ENCODE measurements at regions of chr1 and their contacts with region 1.

Region 1: DNA sequence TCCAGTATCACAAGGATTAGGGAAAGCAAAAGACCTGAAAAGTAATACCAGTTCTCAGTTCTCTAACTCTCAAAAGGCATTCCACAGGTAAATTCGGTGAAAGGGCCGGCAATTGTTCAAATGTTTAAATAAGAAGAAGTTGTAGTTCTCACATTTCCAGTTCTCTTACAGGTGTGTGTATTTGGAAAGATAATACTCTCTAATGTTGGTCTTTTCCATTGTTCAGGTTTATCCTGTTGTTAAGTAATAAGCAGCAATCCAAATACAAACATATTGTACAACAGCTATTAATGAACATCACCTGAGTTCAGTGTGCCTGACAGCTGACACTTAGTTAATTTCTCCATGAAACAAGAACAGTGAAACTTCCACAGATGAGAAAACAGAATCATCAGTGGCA is 13.2 kb upstream of the PRKAB2 start:
- DNase-seq: no peak
- H3K4me3 ChIP-seq: no peak overlapping the region
- H3K27ac ChIP-seq: no peak overlapping the region
- H3K4me1 ChIP-seq: no peaks in the 10 kb centered on the region
- H3K27me3 ChIP-seq: no peaks in the 10 kb centered on the region
- CTCF ChIP-seq: no peak

Region 2: DNA sequence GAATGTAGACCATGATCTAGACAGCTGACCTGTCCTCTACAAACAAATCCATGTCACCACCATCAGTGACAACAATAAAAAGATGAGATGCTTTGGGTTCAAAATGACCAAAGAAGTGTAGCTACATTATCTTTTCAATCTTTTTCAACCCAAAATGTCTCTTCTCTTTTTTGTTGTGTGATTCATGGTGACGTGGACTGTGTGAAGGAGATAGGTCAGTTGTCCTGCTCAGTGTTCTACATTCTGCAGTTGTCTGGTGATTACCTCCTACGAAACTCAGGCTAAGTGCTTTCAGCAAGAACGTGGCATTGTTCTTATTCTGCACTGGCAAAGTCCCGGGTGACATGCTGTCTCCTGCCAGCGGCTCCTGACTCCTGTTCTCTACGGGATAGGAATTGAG is 86.2 kb before region 1 on chr1:
- CTCF ChIA-PET with region 1: no interaction called
- POLR2A ChIA-PET with region 1: no interaction called
- intact Hi-C with region 1: no loop called
- DNase-seq: no peak
- H3K4me3 ChIP-seq: no peak overlapping the region
- H3K27ac ChIP-seq: no peak overlapping the region
- H3K4me1 ChIP-seq: peaks cover 8% of the 10 kb centered on the region; the same call in 1 of the 2 replicates
- H3K27me3 ChIP-seq: no peaks in the 10 kb centered on the region
- CTCF ChIP-seq: no peak

Region 3: GRCh38 chr1:147202576-147202975 is 17.1 kb after region 1 on chr1:
- CTCF ChIA-PET with region 1: no interaction called
- POLR2A ChIA-PET with region 1: no interaction called
- intact Hi-C with region 1: loop called (anchors 1 kb)
- DNase-seq: no peak
- H3K4me3 ChIP-seq: no peak overlapping the region
- H3K27ac ChIP-seq: no peak overlapping the region
- H3K4me1 ChIP-seq: no peaks in the 10 kb centered on the region
- H3K27me3 ChIP-seq: no peaks in the 10 kb centered on the region
- CTCF ChIP-seq: no peak

Measured in PC-9 (cell line).